B cell (primary cell): ENCODE measurements at regions of chr7 and their contacts with region 1.

Region 1: DNA sequence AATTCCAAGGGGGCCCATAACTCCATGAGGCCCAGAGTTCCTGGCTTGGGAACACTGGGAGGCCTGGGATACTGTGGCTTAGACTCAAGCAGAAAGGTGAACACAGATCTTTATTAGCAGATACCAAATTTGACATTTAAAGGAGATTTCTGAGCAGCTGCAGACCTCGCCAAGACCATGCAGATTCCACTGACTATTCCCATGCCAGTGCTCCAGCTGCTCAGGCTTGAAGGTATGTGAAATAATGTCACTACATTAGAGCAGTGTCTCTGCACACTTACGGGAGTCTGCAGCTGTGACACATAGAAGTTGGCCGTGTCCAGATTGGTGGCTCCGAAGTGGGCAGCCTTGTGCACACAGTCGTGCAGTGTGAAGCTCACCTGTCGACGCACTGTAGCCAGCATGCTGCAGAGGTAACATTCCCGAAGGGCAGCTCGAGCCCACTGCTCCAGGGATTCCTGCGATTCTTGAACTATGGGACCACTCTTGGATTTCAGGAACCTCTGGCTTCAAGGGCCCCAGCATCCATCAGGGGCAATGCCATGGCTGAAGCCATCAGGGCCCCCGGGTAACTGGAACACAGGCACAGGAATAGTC is 46.1 kb downstream of the SEPTIN7 start:
- DNase-seq: no peak
- ATAC-seq: no peak
- H3K4me3 ChIP-seq: no peak overlapping the region
- H3K4me3 Mint-ChIP-seq: no peak overlapping the region
- H3K27ac ChIP-seq: no peak overlapping the region
- H3K27ac Mint-ChIP-seq: peak overlapping the region; percentile 26
- H3K4me1 ChIP-seq: no peaks in the 10 kb centered on the region
- H3K4me1 Mint-ChIP-seq: peaks cover 29% of the 10 kb centered on the region
- H3K27me3 ChIP-seq: no peaks in the 10 kb centered on the region
- H3K27me3 Mint-ChIP-seq: no peaks in the 10 kb centered on the region
- CTCF ChIP-seq: no peak

Region 2: GRCh38 chr7:35860664-35861063 is 13.8 kb after region 1 on chr7:
- CTCF ChIA-PET with region 1: interaction called, 6 read pairs
- POLR2A ChIA-PET with region 1: no interaction called
- intact Hi-C with region 1: loop called (anchors 2 kb)
- DNase-seq: no peak
- ATAC-seq: no peak
- H3K4me3 ChIP-seq: no peak overlapping the region
- H3K4me3 Mint-ChIP-seq: no peak overlapping the region
- H3K27ac ChIP-seq: peak overlapping the region in 1 of 2 donors; percentile 37
- H3K27ac Mint-ChIP-seq: no peak overlapping the region
- H3K4me1 ChIP-seq: peaks cover 5 to 13% of the 10 kb centered on the region in 2 donors
- H3K4me1 Mint-ChIP-seq: peaks cover 43% of the 10 kb centered on the region
- H3K27me3 ChIP-seq: no peaks in the 10 kb centered on the region
- H3K27me3 Mint-ChIP-seq: no peaks in the 10 kb centered on the region
- CTCF ChIP-seq: no peak

Region 3: DNA sequence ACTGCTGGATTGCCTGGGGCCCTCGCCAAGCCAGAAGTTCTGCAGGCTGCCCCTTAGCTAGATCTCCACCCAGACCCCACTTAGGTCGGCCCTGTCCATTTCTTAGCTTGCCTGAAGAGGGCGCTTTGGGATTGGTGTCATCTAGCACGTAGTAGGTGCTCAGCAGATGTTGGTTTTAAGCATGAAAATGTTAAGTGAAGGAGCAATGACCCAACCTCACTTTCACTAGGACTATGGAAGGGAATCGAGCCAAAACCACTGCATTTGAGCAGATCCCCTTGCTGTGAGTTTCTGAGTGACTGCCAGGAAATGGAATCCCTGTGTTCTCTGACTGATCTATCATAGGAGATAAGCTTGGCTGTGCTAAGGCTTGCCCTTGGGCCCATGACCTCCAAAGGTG is 174.5 kb after region 1 on chr7:
- CTCF ChIA-PET with region 1: no interaction called
- POLR2A ChIA-PET with region 1: no interaction called
- intact Hi-C with region 1: no loop called
- DNase-seq: no peak
- ATAC-seq: no peak
- H3K4me3 ChIP-seq: no peak overlapping the region
- H3K4me3 Mint-ChIP-seq: no peak overlapping the region
- H3K27ac ChIP-seq: no peak overlapping the region
- H3K27ac Mint-ChIP-seq: no peak overlapping the region
- H3K4me1 ChIP-seq: no peaks in the 10 kb centered on the region
- H3K4me1 Mint-ChIP-seq: no peaks in the 10 kb centered on the region
- H3K27me3 ChIP-seq: no peaks in the 10 kb centered on the region
- H3K27me3 Mint-ChIP-seq: peaks cover 12% of the 10 kb centered on the region
- CTCF ChIP-seq: no peak